ENCODE measurements at regions of chr5 and their contacts with region 1.

Region 1: DNA sequence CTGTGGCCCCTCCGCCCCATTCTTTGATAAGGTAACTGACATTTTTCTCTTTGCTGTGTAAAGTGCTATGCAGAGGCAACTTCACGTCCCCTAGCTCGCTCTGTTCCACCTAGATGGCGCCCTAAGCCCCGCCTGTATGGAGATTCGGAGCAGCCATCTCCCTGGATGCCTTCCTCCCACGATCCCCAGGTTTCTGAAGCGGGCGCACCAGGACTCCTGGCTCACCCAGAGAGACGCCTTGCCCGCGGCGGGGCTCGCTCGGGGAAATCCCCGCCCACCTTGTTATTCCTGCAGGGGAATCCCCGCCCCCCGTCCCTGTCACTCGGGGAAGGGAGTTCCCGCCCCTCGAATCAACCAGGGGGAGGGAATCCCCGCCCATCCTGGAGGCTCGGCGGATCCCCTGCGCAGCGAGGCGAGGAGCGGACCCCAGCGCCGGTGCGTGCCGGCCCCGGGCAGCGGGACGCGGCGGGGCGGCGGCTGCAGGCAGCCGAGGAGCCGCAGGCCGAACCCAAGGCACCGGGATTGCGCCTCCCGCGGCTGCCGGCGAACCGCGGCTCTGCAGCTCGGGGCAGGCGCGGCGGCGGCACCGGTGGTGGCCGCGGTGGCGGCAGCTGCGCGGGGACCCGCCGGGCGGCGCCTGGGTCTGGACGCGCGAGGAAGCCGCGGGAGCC is at the start of gene PDZD2:
- DNase-seq: peak; percentile 62 to 92 (median 84)
- H3K4me3 ChIP-seq: peak within 1 kb of the TSS; percentile 59 to 86 (median 73)
- H3K27ac ChIP-seq: peak within 1 kb of the TSS; percentile 27 to 89 (median 74)
- H3K27me3 ChIP-seq: no peaks in the 10 kb centered on the region
- CTCF ChIP-seq: peak in 53 of 56 donors; percentile 10 to 73 (median 51)
- total RNA-seq, gene PDZD2: 40.2 to 232 (median 105) TPM

Region 2: DNA sequence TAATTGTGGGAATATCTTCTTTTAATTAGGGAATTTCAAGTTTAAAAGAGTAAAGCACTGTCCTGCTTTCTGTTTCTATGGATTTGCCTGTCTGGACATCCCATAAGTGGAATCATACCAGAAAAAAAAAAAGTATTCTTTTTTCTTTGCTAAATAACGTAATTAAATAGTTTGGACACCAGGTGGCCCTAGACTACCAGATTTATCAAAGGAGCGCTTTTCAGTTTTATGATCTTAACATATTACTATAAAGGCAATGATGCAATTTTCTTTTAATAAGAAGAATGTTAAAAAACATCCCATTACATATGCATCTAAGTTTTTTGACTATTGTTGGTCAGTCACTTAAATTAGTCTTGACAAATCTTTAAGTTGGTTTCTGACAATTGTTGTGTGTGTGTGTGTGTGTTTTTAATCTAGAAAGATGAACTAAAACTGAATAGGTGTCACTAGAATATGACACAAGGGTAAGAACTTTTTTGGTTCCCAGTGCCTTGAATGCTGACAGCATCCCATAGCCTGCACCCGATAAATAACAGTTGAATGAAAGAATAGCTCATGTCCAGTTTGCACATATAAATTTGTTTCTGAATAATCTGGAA is 57.3 kb before region 1 on chr5:
- intact Hi-C with region 1: loop called in 1 of 2 experiments (anchors 2 kb)
- DNase-seq: no peak
- H3K4me3 ChIP-seq: no peak overlapping the region
- H3K27ac ChIP-seq: no peak overlapping the region
- H3K27me3 ChIP-seq: no peaks in the 10 kb centered on the region
- CTCF ChIP-seq: peak; percentile 54 to 90 (median 70)

Region 3: DNA sequence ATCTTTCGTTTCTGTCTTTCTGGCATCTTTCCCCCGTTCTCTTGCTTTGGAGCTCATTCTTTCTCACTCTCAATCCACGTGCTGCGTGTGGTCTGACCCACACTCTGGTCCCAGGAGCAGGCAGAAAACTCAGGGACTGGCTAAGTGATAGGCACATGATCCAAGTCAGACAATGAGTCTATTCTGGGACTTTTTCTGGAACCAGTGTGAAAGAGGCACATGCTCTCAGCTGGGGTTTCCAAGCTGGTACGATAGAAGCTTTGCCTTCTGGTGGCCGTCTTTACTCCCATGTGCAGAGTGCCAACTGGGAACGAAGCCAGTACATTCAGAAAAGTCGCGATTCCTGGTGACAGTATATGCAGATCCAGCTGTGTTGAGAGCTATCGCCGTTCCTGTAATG is 94.5 kb after region 1 on chr5:
- intact Hi-C with region 1: loop called (anchors 1 to 2 kb)
- DNase-seq: peak; percentile 23 to 85 (median 71)
- H3K4me3 ChIP-seq: peak overlapping the region in 21 of 59 donors; percentile 2 to 43 (median 17)
- H3K27ac ChIP-seq: peak overlapping the region; percentile 46 to 94 (median 83)
- H3K27me3 ChIP-seq: no peaks in the 10 kb centered on the region
- CTCF ChIP-seq: peak in 14 of 56 donors; percentile 11 to 38 (median 20)

Measured in dorsolateral prefrontal cortex (tissue), 120 donors.